ENCODE measurements at regions of chr17 and their contacts with region 1.

Region 1: GRCh38 chr17:35119368-35120165 is at the start of gene RAD51D:
- DNase-seq: peak; percentile 84 to 92
- ATAC-seq: peak; percentile 93 to 97 (median 95)
- H3K4me3 ChIP-seq: peak within 1 kb of the TSS; percentile 95
- H3K4me3 Mint-ChIP-seq: peak within 1 kb of the TSS; percentile 94
- H3K27ac ChIP-seq: peak within 1 kb of the TSS; percentile 82
- H3K27ac Mint-ChIP-seq: peak within 1 kb of the TSS; percentile 83 to 94
- H3K4me1 ChIP-seq: peaks cover 29% of the 10 kb centered on the region
- H3K4me1 Mint-ChIP-seq: peaks cover 32 to 40% of the 10 kb centered on the region in 2 donors
- H3K27me3 ChIP-seq: no peaks in the 10 kb centered on the region
- H3K27me3 Mint-ChIP-seq: no peaks in the 10 kb centered on the region
- CTCF ChIP-seq: peak; percentile 91
- total RNA-seq, gene RAD51D: 15.4 to 27.0 (median 22.7) TPM

Region 2: GRCh38 chr17:34420254-34420766 is 699.3 kb before region 1 on chr17:
- intact Hi-C with region 1: loop called (anchors 2 kb)
- DNase-seq: peak; percentile 45 to 78
- ATAC-seq: peak; percentile 64 to 75 (median 75)
- H3K4me3 ChIP-seq: no peak overlapping the region
- H3K4me3 Mint-ChIP-seq: no peak overlapping the region
- H3K27ac ChIP-seq: no peak overlapping the region
- H3K27ac Mint-ChIP-seq: no peak overlapping the region
- H3K4me1 ChIP-seq: peaks cover 6% of the 10 kb centered on the region
- H3K4me1 Mint-ChIP-seq: peaks cover 0 to 5% of the 10 kb centered on the region in 2 donors
- H3K27me3 ChIP-seq: no peaks in the 10 kb centered on the region
- H3K27me3 Mint-ChIP-seq: peaks cover 26 to 42% of the 10 kb centered on the region in 2 donors
- CTCF ChIP-seq: peak; percentile 94

Region 3: GRCh38 chr17:34542700-34543336 is 576.7 kb before region 1 on chr17:
- intact Hi-C with region 1: loop called (anchors 1 kb)
- DNase-seq: peak; percentile 40 to 75
- ATAC-seq: peak in 1 of 3 donors; percentile 68
- H3K4me3 ChIP-seq: no peak overlapping the region
- H3K4me3 Mint-ChIP-seq: no peak overlapping the region
- H3K27ac ChIP-seq: no peak overlapping the region
- H3K27ac Mint-ChIP-seq: no peak overlapping the region
- H3K4me1 ChIP-seq: no peaks in the 10 kb centered on the region
- H3K4me1 Mint-ChIP-seq: no peaks in the 10 kb centered on the region
- H3K27me3 ChIP-seq: no peaks in the 10 kb centered on the region
- H3K27me3 Mint-ChIP-seq: peaks cover 9 to 37% of the 10 kb centered on the region in 2 donors
- CTCF ChIP-seq: peak; percentile 81

Region 4: DNA sequence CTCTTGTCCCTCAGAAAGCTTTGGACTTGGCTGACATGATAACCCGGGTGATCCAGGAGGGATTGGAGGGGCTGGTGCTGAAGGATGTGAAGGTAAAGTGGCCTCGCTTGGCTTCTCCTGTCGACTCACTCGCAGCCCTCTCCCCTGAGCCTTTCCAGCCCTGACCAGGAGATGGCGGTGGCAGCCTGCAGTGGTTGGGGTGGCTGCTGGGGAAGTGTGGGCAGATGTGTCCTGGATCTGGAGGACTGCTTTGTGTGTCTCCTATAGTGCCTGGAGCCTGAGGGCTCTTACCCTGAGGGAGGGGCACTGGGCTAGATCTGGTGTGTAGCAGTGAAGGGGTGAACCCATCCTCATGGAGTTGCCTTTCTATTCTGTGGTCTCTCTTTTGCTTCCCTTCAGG is 121.4 kb before region 1 on chr17:
- intact Hi-C with region 1: loop called (anchors 1 kb)
- DNase-seq: peak; percentile 72 to 87
- ATAC-seq: peak; percentile 90 to 99 (median 97)
- H3K4me3 ChIP-seq: no peak overlapping the region
- H3K4me3 Mint-ChIP-seq: no peak overlapping the region
- H3K27ac ChIP-seq: no peak overlapping the region
- H3K27ac Mint-ChIP-seq: peak overlapping the region; percentile 34 to 83
- H3K4me1 ChIP-seq: peaks cover 7% of the 10 kb centered on the region
- H3K4me1 Mint-ChIP-seq: peaks cover 6 to 9% of the 10 kb centered on the region in 2 donors
- H3K27me3 ChIP-seq: no peaks in the 10 kb centered on the region
- H3K27me3 Mint-ChIP-seq: no peaks in the 10 kb centered on the region
- CTCF ChIP-seq: peak; percentile 77

Region 5: DNA sequence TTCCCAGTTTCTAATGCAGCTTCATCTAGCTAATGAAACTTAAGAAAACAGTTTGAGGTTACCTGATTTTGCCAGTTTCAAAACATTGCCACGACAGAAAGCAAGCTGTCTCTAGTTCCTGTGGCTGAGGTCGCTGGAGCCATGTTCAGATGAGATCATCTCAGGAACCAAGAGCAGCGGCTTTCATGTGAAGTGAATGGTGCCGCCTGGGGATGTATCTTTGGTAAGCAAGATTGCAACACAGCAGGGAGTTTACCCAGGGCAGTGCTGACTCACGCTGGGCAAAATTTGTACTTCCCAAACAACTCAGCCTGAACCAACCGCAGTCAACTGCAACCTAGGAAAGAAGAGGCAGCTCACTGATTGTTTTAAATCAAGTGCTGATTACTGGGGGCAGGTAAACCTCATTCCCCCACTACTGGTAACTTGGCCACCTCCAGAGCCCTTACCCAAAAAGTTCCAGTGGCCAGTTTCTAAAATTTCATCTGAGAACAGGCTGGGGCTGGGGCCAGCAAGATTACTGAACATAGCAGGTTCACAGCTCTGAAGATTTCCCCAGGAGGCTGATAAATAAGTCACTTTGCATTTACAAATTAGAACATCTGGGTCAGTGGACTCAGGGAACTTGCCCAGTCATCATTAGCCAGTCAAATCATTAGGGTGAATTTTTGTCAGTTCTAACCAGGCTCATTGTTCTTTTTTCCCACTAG is 55.9 kb before region 1 on chr17 and contains the start of gene RFFL:
- intact Hi-C with region 1: loop called (anchors 1 kb)
- DNase-seq: peak; percentile 78 to 96
- ATAC-seq: peak; percentile 92 to 98 (median 95)
- H3K4me3 ChIP-seq: peak within 1 kb of the TSS; percentile 23
- H3K4me3 Mint-ChIP-seq: peak within 1 kb of the TSS; percentile 59
- H3K27ac ChIP-seq: peak within 1 kb of the TSS; percentile 82
- H3K27ac Mint-ChIP-seq: peak within 1 kb of the TSS; percentile 98 to 99
- H3K4me1 ChIP-seq: peaks cover 16% of the 10 kb centered on the region
- H3K4me1 Mint-ChIP-seq: peaks cover 49 to 58% of the 10 kb centered on the region in 2 donors
- H3K27me3 ChIP-seq: no peaks in the 10 kb centered on the region
- H3K27me3 Mint-ChIP-seq: no peaks in the 10 kb centered on the region
- CTCF ChIP-seq: no peak
- total RNA-seq, gene RFFL: 50.0 to 86.6 (median 75.9) TPM

Region 6: DNA sequence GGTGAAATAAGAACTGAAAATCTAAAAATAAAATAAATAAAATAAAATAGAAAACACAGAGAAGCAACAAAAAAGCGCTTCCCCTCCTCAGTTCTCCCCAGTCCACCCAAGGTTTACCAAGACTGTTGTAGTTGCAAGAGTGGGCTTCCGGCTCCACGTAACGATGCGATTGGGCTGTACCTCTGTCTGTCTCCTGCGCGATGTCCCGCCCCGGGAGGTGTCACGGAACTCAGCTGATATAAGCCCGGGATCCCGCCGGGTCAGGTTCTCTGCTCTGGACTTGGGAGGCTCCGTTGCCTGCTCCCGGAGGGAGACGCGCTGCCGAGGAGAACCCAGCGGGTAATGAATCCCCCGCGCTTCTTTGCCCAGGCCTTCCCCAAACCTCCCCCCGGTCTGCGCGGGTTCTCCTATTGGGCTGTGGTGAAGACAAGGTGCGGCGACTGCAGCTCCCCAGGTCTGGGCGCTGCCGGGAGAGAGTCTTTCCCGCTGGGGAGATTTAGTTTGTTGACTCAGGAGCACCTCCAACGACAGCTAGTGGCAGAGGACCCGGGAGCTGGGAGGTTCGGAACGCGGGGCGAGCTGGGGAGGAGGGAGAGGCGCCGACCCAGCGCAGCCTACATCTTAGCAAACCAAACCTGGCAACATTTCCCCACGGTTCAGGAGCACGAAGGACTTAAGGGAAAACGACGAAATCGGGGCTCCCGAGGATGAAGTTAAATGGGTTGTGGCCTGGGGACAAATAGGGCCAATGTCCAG is 123.4 kb after region 1 on chr17 and contains the start of gene SLFN5:
- intact Hi-C with region 1: no loop called
- DNase-seq: peak; percentile 96 to 97
- ATAC-seq: peak; percentile 65 to 86 (median 77)
- H3K4me3 ChIP-seq: peak within 1 kb of the TSS; percentile 78
- H3K4me3 Mint-ChIP-seq: peak within 1 kb of the TSS; percentile 97
- H3K27ac ChIP-seq: peak within 1 kb of the TSS; percentile 98
- H3K27ac Mint-ChIP-seq: peak within 1 kb of the TSS; percentile 97 to 100
- H3K4me1 ChIP-seq: peaks cover 52% of the 10 kb centered on the region
- H3K4me1 Mint-ChIP-seq: peaks cover 73 to 76% of the 10 kb centered on the region in 2 donors
- H3K27me3 ChIP-seq: no peaks in the 10 kb centered on the region
- H3K27me3 Mint-ChIP-seq: no peaks in the 10 kb centered on the region
- CTCF ChIP-seq: no peak
- total RNA-seq, gene SLFN5: 118 to 164 (median 141) TPM